SK-N-SH (cell line): ENCODE measurements at regions of chr9 and their contacts with region 1.

Region 1: GRCh38 chr9:126690431-126691350 is 77.0 kb downstream of the LMX1B start:
- DNase-seq: peak; percentile 82
- H3K4me3 ChIP-seq: no peak overlapping the region; a peak in 1 of 4 replicates
- H3K27ac ChIP-seq: no peak overlapping the region
- H3K4me1 ChIP-seq: no peaks in the 10 kb centered on the region
- H3K27me3 ChIP-seq: peaks cover 44% of the 10 kb centered on the region
- CTCF ChIP-seq: peak; percentile 66
- EP300 ChIP-seq: no peak
- RAD21 ChIP-seq: peak; percentile 50

Region 2: GRCh38 chr9:126604059-126605055 is 86.3 kb before region 1 on chr9:
- CTCF ChIA-PET with region 1: interaction called, 65 read pairs
- POLR2A ChIA-PET with region 1: no interaction called
- DNase-seq: no peak
- H3K4me3 ChIP-seq: no peak overlapping the region
- H3K27ac ChIP-seq: no peak overlapping the region
- H3K4me1 ChIP-seq: no peaks in the 10 kb centered on the region
- H3K27me3 ChIP-seq: peaks cover 41% of the 10 kb centered on the region
- CTCF ChIP-seq: no peak
- EP300 ChIP-seq: no peak
- RAD21 ChIP-seq: no peak

Region 3: GRCh38 chr9:126626127-126626925 is 64.4 kb before region 1 on chr9:
- CTCF ChIA-PET with region 1: interaction called, 21 read pairs
- POLR2A ChIA-PET with region 1: no interaction called
- DNase-seq: no peak
- H3K4me3 ChIP-seq: no peak overlapping the region; a peak in 1 of 4 replicates
- H3K27ac ChIP-seq: no peak overlapping the region
- H3K4me1 ChIP-seq: peaks cover 0 to 17% of the 10 kb centered on the region in 2 experiments; a peak in 2 of 4 replicates
- H3K27me3 ChIP-seq: peaks cover 100% of the 10 kb centered on the region
- CTCF ChIP-seq: no peak
- EP300 ChIP-seq: no peak
- RAD21 ChIP-seq: no peak

Region 4: GRCh38 chr9:126643733-126644527 is 46.8 kb before region 1 on chr9:
- CTCF ChIA-PET with region 1: interaction called, 28 read pairs
- POLR2A ChIA-PET with region 1: no interaction called
- DNase-seq: no peak
- H3K4me3 ChIP-seq: no peak overlapping the region
- H3K27ac ChIP-seq: no peak overlapping the region
- H3K4me1 ChIP-seq: no peaks in the 10 kb centered on the region; a peak in 1 of 4 replicates
- H3K27me3 ChIP-seq: peaks cover 98% of the 10 kb centered on the region
- CTCF ChIP-seq: no peak
- EP300 ChIP-seq: no peak
- RAD21 ChIP-seq: no peak

Region 5: DNA sequence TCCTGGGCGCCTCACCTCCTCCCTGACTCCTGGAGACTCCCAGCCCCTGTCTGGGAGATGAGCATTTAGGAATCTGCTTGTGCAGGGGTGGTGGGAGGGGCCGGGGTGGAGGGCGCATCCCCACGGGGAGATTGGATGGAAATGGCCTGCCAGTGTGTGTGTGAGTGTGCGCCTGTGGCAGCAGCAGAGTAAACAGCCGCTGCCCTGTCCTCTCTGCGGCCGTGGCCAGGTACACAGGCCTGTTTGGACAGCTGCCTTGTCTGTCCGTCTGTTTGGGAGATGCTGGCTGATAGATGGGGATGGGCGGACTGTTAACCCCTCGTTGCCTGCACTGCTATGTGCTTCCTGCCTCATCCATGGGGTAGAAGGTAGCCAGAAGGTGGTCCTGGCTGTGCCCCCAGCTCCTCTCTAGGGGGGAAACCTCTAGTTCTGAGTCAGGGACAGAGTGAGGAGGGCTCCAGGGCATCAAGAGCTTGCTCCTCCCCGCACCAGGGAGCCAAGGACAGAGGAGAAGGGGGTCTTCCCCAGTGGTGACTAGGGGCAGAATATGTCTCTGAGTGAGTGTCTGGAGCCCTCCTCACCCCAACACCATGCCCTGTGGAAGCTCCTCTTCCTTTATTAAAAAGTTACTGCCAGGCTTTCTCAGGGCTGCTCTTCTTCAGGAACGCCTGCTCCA is 16.9 kb before region 1 on chr9:
- CTCF ChIA-PET with region 1: interaction called, 45 read pairs
- POLR2A ChIA-PET with region 1: no interaction called
- DNase-seq: peak; percentile 76
- H3K4me3 ChIP-seq: no peak overlapping the region
- H3K27ac ChIP-seq: no peak overlapping the region
- H3K4me1 ChIP-seq: peaks cover 0 to 18% of the 10 kb centered on the region in 2 experiments; a peak in 1 of 4 replicates
- H3K27me3 ChIP-seq: peaks cover 39% of the 10 kb centered on the region
- CTCF ChIP-seq: no peak
- EP300 ChIP-seq: no peak
- RAD21 ChIP-seq: no peak

Region 6: GRCh38 chr9:126773004-126773607 is 82.4 kb after region 1 on chr9:
- CTCF ChIA-PET with region 1: interaction called, 13 read pairs
- POLR2A ChIA-PET with region 1: no interaction called
- DNase-seq: peak; percentile 52
- H3K4me3 ChIP-seq: no peak overlapping the region
- H3K27ac ChIP-seq: no peak overlapping the region
- H3K4me1 ChIP-seq: no peaks in the 10 kb centered on the region
- H3K27me3 ChIP-seq: no peaks in the 10 kb centered on the region
- CTCF ChIP-seq: peak; percentile 44
- EP300 ChIP-seq: no peak
- RAD21 ChIP-seq: peak; percentile 37

Region 7: GRCh38 chr9:126853667-126854066 is 163.0 kb after region 1 on chr9:
- CTCF ChIA-PET with region 1: no interaction called
- POLR2A ChIA-PET with region 1: no interaction called
- DNase-seq: no peak
- H3K4me3 ChIP-seq: no peak overlapping the region
- H3K27ac ChIP-seq: no peak overlapping the region
- H3K4me1 ChIP-seq: no peaks in the 10 kb centered on the region; a peak in 1 of 4 replicates
- H3K27me3 ChIP-seq: no peaks in the 10 kb centered on the region; the same call in 1 of the 2 replicates
- CTCF ChIP-seq: no peak
- EP300 ChIP-seq: no peak
- RAD21 ChIP-seq: no peak